CD8-positive, alpha-beta T cell (primary cell): ENCODE measurements at regions of chr22 and their contacts with region 1.

Region 1: GRCh38 chr22:37643225-37643847 is 3.9 kb downstream of the SH3BP1 start:
- DNase-seq: peak; percentile 78 to 93 (median 85)
- ATAC-seq: peak; percentile 62
- H3K4me3 ChIP-seq: no peak overlapping the region
- H3K4me3 Mint-ChIP-seq: peak overlapping the region; percentile 65
- H3K27ac ChIP-seq: peak overlapping the region; percentile 15 to 43
- H3K27ac Mint-ChIP-seq: peak overlapping the region; percentile 69
- H3K4me1 ChIP-seq: peaks cover 39% of the 10 kb centered on the region
- H3K4me1 Mint-ChIP-seq: peaks cover 42% of the 10 kb centered on the region
- H3K27me3 ChIP-seq: no peaks in the 10 kb centered on the region
- H3K27me3 Mint-ChIP-seq: no peaks in the 10 kb centered on the region
- CTCF ChIP-seq: peak; percentile 85

Region 2: DNA sequence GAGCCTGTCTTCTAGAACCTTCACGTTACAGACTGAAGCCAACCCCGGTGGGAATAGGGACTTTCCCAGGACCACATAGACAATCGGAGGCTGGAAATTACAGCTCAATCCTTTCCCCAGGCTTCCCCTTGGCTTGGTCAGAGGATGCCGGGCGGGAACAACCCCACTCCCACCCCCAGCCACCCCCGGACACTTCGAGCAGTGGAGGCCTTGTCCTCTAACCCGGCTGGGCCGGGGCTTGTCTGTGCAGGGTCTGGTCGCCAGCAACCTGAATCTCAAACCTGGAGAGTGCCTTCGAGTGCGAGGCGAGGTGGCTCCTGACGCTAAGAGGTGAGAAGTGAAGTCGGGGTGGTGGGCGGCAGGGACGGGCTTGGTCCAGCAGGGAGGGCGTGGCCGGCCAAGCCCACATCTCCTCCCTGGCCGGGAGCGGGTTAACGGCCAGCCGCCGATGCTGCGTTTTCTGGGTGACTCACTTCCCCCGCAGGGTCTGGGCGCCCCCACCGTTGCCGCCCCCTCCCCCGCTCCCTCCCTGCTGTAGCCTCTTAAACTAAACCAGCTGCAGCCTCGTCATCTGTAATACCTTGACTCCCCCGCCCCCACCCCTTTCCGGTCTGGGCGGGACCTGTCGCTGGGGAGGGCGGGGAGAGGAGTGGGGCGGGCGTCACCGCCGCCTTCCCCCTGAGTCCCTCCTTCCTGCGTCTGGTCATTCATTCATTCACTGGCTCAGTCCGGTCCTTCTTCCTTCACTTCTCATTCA is 33.6 kb after region 1 on chr22:
- CTCF ChIA-PET with region 1: interaction called, 2,176 read pairs
- POLR2A ChIA-PET with region 1: interaction called, 15 read pairs
- intact Hi-C with region 1: loop called (anchors 1 kb)
- DNase-seq: peak; percentile 85 to 96 (median 94)
- ATAC-seq: peak; percentile 89
- H3K4me3 ChIP-seq: peak overlapping the region; percentile 73 to 93
- H3K4me3 Mint-ChIP-seq: peak overlapping the region; percentile 95
- H3K27ac ChIP-seq: peak overlapping the region; percentile 91 to 95
- H3K27ac Mint-ChIP-seq: peak overlapping the region; percentile 100
- H3K4me1 ChIP-seq: peaks cover 50% of the 10 kb centered on the region
- H3K4me1 Mint-ChIP-seq: peaks cover 55% of the 10 kb centered on the region
- H3K27me3 ChIP-seq: no peaks in the 10 kb centered on the region
- H3K27me3 Mint-ChIP-seq: no peaks in the 10 kb centered on the region
- CTCF ChIP-seq: no peak

Region 3: GRCh38 chr22:38080850-38081635 is 437.7 kb after region 1 on chr22:
- CTCF ChIA-PET with region 1: no interaction called
- POLR2A ChIA-PET with region 1: no interaction called
- intact Hi-C with region 1: no loop called
- DNase-seq: no peak
- ATAC-seq: no peak
- H3K4me3 ChIP-seq: no peak overlapping the region
- H3K4me3 Mint-ChIP-seq: peak overlapping the region; percentile 8
- H3K27ac ChIP-seq: no peak overlapping the region
- H3K27ac Mint-ChIP-seq: no peak overlapping the region
- H3K4me1 ChIP-seq: peaks cover 14% of the 10 kb centered on the region
- H3K4me1 Mint-ChIP-seq: peaks cover 6% of the 10 kb centered on the region
- H3K27me3 ChIP-seq: peaks cover 12 to 21% of the 10 kb centered on the region in 2 experiments
- H3K27me3 Mint-ChIP-seq: peaks cover 21% of the 10 kb centered on the region
- CTCF ChIP-seq: no peak